HCT116 (cell line): ENCODE measurements at regions of chr17 and their contacts with region 1.

Region 1: GRCh38 chr17:56499799-56500388 is 93.6 kb upstream of the NOG start:
- DNase-seq: peak; percentile 57
- ATAC-seq: peak; percentile 54
- H3K4me3 ChIP-seq: no peak overlapping the region
- H3K27ac ChIP-seq: no peak overlapping the region
- H3K4me1 ChIP-seq: no peaks in the 10 kb centered on the region
- H3K27me3 ChIP-seq: peaks cover 35% of the 10 kb centered on the region
- CTCF ChIP-seq: peak; percentile 72 to 80 (median 78)
- POLR2A ChIP-seq: no peak
- RAD21 ChIP-seq: peak; percentile 79

Region 2: DNA sequence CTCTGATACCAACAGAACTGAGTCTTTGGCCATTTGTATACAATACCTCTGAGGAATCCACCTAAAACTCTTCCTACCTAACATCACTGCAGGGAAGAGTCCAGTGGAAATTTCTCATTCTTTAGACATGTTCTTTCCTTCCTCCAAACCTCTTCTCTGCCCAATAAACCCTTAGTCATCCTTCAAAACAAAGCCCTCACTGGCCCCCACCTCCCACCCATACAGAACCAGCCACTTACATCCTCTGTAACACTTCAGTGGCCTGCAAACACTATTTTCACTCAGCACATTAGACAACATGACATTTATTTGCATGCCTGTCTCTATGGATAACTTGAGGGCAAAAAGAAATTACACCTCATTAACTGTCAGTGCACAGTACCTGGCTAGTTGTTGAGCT is 106.7 kb before region 1 on chr17:
- CTCF ChIA-PET with region 1: no interaction called
- POLR2A ChIA-PET with region 1: no interaction called
- RAD21 ChIA-PET with region 1: no interaction called
- intact Hi-C with region 1: no loop called
- DNase-seq: no peak
- ATAC-seq: no peak
- H3K4me3 ChIP-seq: no peak overlapping the region
- H3K27ac ChIP-seq: no peak overlapping the region
- H3K4me1 ChIP-seq: no peaks in the 10 kb centered on the region
- H3K27me3 ChIP-seq: peaks cover 15% of the 10 kb centered on the region
- CTCF ChIP-seq: no peak
- POLR2A ChIP-seq: no peak
- RAD21 ChIP-seq: no peak

Region 3: DNA sequence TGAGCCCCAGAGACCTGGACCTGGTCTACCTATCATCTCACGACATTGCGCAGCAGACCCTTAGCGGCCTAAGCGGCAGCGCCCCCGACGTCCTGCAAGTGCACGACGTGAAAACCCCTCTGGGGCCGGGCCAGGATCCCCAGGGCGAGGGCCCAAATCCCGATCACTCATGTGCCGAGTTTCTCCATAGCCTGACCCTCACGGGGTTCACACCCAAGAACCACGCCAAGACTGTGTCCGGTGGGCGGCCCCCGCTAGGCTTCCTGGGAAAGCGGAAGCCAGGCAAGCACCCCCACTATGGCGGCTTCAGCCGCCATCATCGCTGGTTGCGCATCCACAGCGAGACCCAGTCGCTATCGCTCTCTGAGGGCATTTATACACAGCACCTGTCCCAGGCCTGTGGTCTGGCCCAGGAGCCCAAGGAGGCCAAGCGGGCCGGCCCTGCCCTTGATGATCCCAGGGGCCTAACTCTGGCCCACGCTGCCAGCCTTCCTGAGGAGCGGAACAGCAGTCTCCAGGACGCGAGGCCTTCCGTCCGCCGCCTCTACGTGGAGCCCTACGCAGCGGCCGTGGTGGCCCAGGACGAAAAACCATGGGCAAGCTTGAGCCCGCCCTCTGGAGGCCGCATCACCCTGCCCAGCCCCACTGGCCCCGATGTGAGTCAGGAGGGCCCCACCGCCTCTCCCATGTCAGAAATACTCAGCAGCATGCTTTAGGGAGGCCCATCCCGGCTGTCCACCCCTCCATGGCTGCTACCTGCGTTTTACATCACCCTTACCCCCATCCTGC is 10.9 kb after region 1 on chr17:
- CTCF ChIA-PET with region 1: interaction called, 28 read pairs
- POLR2A ChIA-PET with region 1: interaction called, 3 read pairs
- RAD21 ChIA-PET with region 1: no interaction called
- intact Hi-C with region 1: no loop called
- DNase-seq: no peak
- ATAC-seq: no peak
- H3K4me3 ChIP-seq: no peak overlapping the region
- H3K27ac ChIP-seq: no peak overlapping the region
- H3K4me1 ChIP-seq: no peaks in the 10 kb centered on the region
- H3K27me3 ChIP-seq: peaks cover 55% of the 10 kb centered on the region
- CTCF ChIP-seq: no peak
- POLR2A ChIP-seq: no peak
- RAD21 ChIP-seq: no peak

Region 4: GRCh38 chr17:56592487-56593085 is 92.7 kb after region 1 on chr17:
- CTCF ChIA-PET with region 1: interaction called, 17 read pairs
- POLR2A ChIA-PET with region 1: no interaction called
- RAD21 ChIA-PET with region 1: interaction called, 3 to 8 read pairs
- intact Hi-C with region 1: no loop called
- DNase-seq: no peak
- ATAC-seq: peak; percentile 80
- H3K4me3 ChIP-seq: peak overlapping the region; percentile 60 to 71
- H3K27ac ChIP-seq: no peak overlapping the region
- H3K4me1 ChIP-seq: peaks cover 5 to 21% of the 10 kb centered on the region in 2 experiments; a peak in 2 of 4 replicates
- H3K27me3 ChIP-seq: peaks cover 35% of the 10 kb centered on the region; the same call in 1 of the 2 replicates
- CTCF ChIP-seq: peak; percentile 72 to 98 (median 76)
- POLR2A ChIP-seq: no peak
- RAD21 ChIP-seq: peak; percentile 87

Region 5: GRCh38 chr17:56638591-56639051 is 138.7 kb after region 1 on chr17:
- CTCF ChIA-PET with region 1: no interaction called
- POLR2A ChIA-PET with region 1: no interaction called
- RAD21 ChIA-PET with region 1: no interaction called
- intact Hi-C with region 1: no loop called
- DNase-seq: no peak
- ATAC-seq: no peak
- H3K4me3 ChIP-seq: no peak overlapping the region
- H3K27ac ChIP-seq: no peak overlapping the region
- H3K4me1 ChIP-seq: no peaks in the 10 kb centered on the region
- H3K27me3 ChIP-seq: peaks cover 21% of the 10 kb centered on the region
- CTCF ChIP-seq: no peak
- POLR2A ChIP-seq: no peak
- RAD21 ChIP-seq: no peak

Region 6: DNA sequence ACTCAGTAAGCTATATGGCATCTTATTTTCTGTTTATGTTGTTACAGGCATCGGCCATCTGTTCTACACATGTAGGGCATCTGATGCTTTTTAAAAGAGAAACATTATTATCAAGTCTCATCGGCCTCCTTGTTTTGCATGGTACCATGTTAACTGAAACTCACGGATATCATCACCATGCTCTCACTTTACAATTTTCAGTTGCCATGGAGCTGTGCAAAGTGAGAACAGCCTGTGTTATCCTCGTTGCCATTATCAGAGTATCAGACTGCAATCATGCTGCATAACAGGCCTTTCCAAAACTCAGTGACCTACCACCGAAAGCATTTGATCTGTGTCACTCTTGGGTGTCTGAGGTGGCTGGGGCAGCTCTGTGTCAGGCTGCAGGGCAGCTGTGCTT is 223.5 kb after region 1 on chr17:
- CTCF ChIA-PET with region 1: interaction called, 221 read pairs
- POLR2A ChIA-PET with region 1: no interaction called
- RAD21 ChIA-PET with region 1: no interaction called
- intact Hi-C with region 1: no loop called
- DNase-seq: no peak
- ATAC-seq: no peak
- H3K4me3 ChIP-seq: no peak overlapping the region
- H3K27ac ChIP-seq: no peak overlapping the region
- H3K4me1 ChIP-seq: no peaks in the 10 kb centered on the region
- H3K27me3 ChIP-seq: peaks cover 7% of the 10 kb centered on the region; the same call in 1 of the 2 replicates
- CTCF ChIP-seq: no peak
- POLR2A ChIP-seq: no peak
- RAD21 ChIP-seq: no peak

Region 7: GRCh38 chr17:56939901-56940343 is 440.0 kb after region 1 on chr17:
- CTCF ChIA-PET with region 1: interaction called, 6 read pairs
- POLR2A ChIA-PET with region 1: no interaction called
- RAD21 ChIA-PET with region 1: interaction called in 1 of 2 experiments, 3 read pairs
- intact Hi-C with region 1: loop called (anchors 5 kb)
- DNase-seq: peak; percentile 50
- ATAC-seq: peak; percentile 89
- H3K4me3 ChIP-seq: no peak overlapping the region
- H3K27ac ChIP-seq: no peak overlapping the region
- H3K4me1 ChIP-seq: peaks cover 4 to 6% of the 10 kb centered on the region in 2 experiments; a peak in 1 of 4 replicates
- H3K27me3 ChIP-seq: no peaks in the 10 kb centered on the region
- CTCF ChIP-seq: peak; percentile 73 to 91 (median 84)
- POLR2A ChIP-seq: no peak
- RAD21 ChIP-seq: peak; percentile 94